ENCODE measurements at regions of chr1 and their contacts with region 1.

Region 1: GRCh38 chr1:110460253-110461220 is 9.6 kb downstream of the PROK1 start:
- DNase-seq: peak; percentile 88
- ATAC-seq: peak; percentile 87
- H3K4me3 Mint-ChIP-seq: no peak overlapping the region
- H3K27ac Mint-ChIP-seq: no peak overlapping the region
- H3K4me1 Mint-ChIP-seq: no peaks in the 10 kb centered on the region
- H3K27me3 Mint-ChIP-seq: no peaks in the 10 kb centered on the region; the same call in 1 of the 2 replicates
- CTCF ChIP-seq: peak; percentile 81

Region 2: GRCh38 chr1:110034451-110035235 is 425.9 kb before region 1 on chr1 and contains the start of gene STRIP1:
- CTCF ChIA-PET with region 1: interaction called, 10 read pairs
- POLR2A ChIA-PET with region 1: no interaction called
- DNase-seq: peak; percentile 88
- ATAC-seq: peak; percentile 83
- H3K4me3 Mint-ChIP-seq: peak within 1 kb of the TSS; percentile 92
- H3K27ac Mint-ChIP-seq: peak within 1 kb of the TSS; percentile 95
- H3K4me1 Mint-ChIP-seq: peaks cover 33% of the 10 kb centered on the region
- H3K27me3 Mint-ChIP-seq: no peaks in the 10 kb centered on the region
- CTCF ChIP-seq: no peak
- total RNA-seq, gene STRIP1: 36.8 to 42.8 TPM (median 38.2 TPM) in 3 replicates

Region 3: GRCh38 chr1:110203021-110203661 is 257.4 kb before region 1 on chr1:
- CTCF ChIA-PET with region 1: interaction called, 132 read pairs
- POLR2A ChIA-PET with region 1: no interaction called
- DNase-seq: peak; percentile 62
- ATAC-seq: peak; percentile 56
- H3K4me3 Mint-ChIP-seq: no peak overlapping the region
- H3K27ac Mint-ChIP-seq: no peak overlapping the region
- H3K4me1 Mint-ChIP-seq: peaks cover 4% of the 10 kb centered on the region
- H3K27me3 Mint-ChIP-seq: no peaks in the 10 kb centered on the region
- CTCF ChIP-seq: peak; percentile 74

Region 4: GRCh38 chr1:110338886-110339406 is 121.6 kb before region 1 on chr1 and contains the start of gene RBM15:
- CTCF ChIA-PET with region 1: interaction called, 37 read pairs
- POLR2A ChIA-PET with region 1: no interaction called
- DNase-seq: peak; percentile 96
- ATAC-seq: peak; percentile 84
- H3K4me3 Mint-ChIP-seq: no peak within 1 kb of the TSS
- H3K27ac Mint-ChIP-seq: no peak within 1 kb of the TSS; the same call in 1 of the 2 replicates
- H3K4me1 Mint-ChIP-seq: peaks cover 52% of the 10 kb centered on the region
- H3K27me3 Mint-ChIP-seq: no peaks in the 10 kb centered on the region
- CTCF ChIP-seq: no peak
- total RNA-seq, gene RBM15: 43.5 to 50.6 TPM (median 44.8 TPM) in 3 replicates

Region 5: DNA sequence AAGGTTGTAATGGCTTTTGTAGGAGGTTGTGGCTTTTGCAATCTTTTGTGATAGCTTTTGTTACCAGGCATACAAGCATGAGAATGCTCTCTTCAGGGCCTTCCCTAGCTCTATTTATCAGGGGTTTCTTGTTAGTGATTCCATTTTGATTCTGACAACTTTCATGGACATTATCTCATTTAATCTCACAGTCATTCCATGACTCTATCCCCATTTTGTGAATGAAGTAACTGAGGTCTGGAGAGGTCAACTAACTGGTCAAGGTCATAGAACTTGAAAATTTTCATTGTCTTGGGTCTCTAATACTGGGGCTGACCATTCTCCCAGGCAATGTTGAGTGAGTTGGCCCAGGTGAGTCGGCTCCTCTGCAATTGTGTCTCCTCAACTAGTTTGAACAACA is 41.8 kb before region 1 on chr1:
- CTCF ChIA-PET with region 1: interaction called, 188 read pairs
- POLR2A ChIA-PET with region 1: no interaction called
- DNase-seq: no peak
- ATAC-seq: no peak
- H3K4me3 Mint-ChIP-seq: no peak overlapping the region
- H3K27ac Mint-ChIP-seq: no peak overlapping the region
- H3K4me1 Mint-ChIP-seq: peaks cover 17% of the 10 kb centered on the region
- H3K27me3 Mint-ChIP-seq: no peaks in the 10 kb centered on the region; the same call in 1 of the 2 replicates
- CTCF ChIP-seq: no peak

Region 6: GRCh38 chr1:110477041-110477440 is 16.5 kb after region 1 on chr1:
- CTCF ChIA-PET with region 1: interaction called, 23 read pairs
- POLR2A ChIA-PET with region 1: no interaction called
- DNase-seq: no peak
- ATAC-seq: no peak
- H3K4me3 Mint-ChIP-seq: no peak overlapping the region
- H3K27ac Mint-ChIP-seq: no peak overlapping the region
- H3K4me1 Mint-ChIP-seq: peaks cover 24% of the 10 kb centered on the region
- H3K27me3 Mint-ChIP-seq: no peaks in the 10 kb centered on the region; the same call in 1 of the 2 replicates
- CTCF ChIP-seq: no peak

Region 7: DNA sequence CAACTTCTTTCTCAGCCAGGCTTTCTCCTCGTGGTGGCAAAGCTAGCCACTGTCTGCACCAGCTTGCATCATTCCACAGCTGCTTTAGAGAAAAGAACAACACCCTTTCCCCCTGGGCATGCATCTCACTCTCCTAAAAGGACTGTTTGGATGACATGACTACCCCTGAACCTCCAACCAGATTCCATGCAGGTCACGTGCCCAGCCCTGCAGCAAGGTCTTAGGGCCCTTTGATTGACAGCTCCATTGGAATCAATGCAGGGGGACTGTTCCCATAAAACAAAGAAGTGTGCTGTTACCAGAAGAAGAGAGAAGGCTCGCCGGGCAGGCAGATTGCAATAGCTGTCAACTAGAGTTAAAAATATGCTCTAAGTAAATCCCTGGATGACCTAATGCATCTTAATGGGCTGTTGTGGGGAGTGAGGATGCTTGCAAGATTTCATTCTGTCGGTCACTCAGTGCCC is 121.2 kb after region 1 on chr1:
- CTCF ChIA-PET with region 1: no interaction called
- POLR2A ChIA-PET with region 1: no interaction called
- DNase-seq: no peak
- ATAC-seq: no peak
- H3K4me3 Mint-ChIP-seq: no peak overlapping the region
- H3K27ac Mint-ChIP-seq: no peak overlapping the region
- H3K4me1 Mint-ChIP-seq: no peaks in the 10 kb centered on the region
- H3K27me3 Mint-ChIP-seq: peaks cover 55% of the 10 kb centered on the region
- CTCF ChIP-seq: no peak

Region 8: GRCh38 chr1:110594456-110595352 is 134.2 kb after region 1 on chr1:
- CTCF ChIA-PET with region 1: no interaction called
- POLR2A ChIA-PET with region 1: no interaction called
- DNase-seq: no peak
- ATAC-seq: no peak
- H3K4me3 Mint-ChIP-seq: no peak overlapping the region
- H3K27ac Mint-ChIP-seq: no peak overlapping the region
- H3K4me1 Mint-ChIP-seq: no peaks in the 10 kb centered on the region
- H3K27me3 Mint-ChIP-seq: peaks cover 18% of the 10 kb centered on the region
- CTCF ChIP-seq: no peak

Measured in WTC11 (cell line).